ENCODE measurements at regions of chr6 and their contacts with region 1.

Region 1: DNA sequence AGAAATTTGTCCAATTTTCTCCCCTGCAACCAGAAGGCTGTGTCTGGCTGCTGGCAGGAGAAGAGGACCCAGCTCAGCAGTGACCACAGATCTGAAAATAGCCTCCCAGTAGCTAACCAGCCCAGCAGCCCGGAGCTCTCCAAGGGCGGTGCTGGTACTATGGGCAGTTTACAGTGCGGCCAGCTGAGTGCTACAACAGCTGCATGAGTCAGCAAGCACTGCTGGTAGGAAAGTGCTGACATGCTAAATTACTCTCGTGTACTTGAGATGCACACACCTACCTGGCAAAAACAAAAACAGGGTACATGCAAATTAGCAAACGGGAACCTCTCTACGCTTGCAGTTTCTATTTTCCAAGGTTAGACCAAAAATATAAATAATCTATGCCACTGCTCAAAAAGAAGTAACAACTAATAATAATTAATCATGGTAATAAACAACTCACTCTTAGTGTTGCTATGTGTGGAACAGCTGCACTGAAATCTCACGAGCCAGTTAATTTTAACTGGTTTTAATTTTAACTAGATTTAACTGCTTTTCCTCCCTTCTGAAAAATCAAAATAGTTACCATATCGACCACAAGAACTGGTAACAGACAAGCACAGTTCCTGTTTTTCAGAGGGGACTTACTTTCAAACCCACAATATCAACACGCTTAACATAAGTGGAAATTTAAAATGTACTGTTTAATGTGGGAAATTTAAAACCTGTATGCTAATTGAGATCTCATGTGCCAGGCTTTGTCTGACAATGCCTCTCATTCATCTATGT is 10.8 kb downstream of the BACH2 start:
- DNase-seq: peak; percentile 74
- H3K4me3 Mint-ChIP-seq: peak overlapping the region; percentile 72
- H3K27ac Mint-ChIP-seq: peak overlapping the region; percentile 96
- H3K4me1 Mint-ChIP-seq: peaks cover 40% of the 10 kb centered on the region
- H3K27me3 Mint-ChIP-seq: no peaks in the 10 kb centered on the region
- CTCF ChIP-seq: no peak

Region 2: DNA sequence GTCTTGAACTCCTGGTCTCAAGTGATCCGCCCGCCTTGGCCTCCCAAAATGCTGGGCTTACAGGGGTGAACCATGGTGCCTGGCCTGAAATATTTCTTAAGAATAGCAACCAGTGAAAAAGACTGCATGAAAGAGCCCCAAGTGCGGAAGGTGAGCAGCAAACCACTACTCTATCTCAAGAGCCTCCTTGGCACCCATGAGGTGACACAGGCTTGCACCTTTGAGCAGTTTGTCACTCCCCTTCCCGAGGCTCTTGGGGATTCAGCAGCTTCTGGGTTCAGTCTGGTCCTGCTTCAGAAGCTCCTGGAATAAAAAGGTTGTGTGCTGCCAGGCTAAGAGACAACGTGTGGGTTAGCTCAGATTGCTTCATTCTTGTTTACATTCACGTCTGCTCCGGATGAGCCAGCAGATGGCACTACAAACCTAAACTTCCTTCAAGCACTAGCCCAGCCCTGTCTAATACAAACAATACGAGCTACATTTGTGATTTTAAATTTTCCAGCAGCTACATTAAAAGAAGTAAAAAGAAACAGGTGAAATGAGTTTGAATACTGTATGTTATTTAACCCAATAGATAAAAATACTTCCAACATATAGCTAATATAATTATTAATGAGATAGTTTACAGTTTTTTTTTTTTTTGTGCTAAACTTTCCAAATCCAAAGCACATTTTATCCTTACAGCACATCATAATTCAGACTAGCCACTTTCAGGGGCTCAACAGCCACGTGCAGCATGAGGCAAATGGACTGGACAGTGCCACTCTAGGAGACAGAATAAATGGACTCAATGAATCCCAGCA is 345.4 kb before region 1 on chr6:
- CTCF ChIA-PET with region 1: interaction called, 14 read pairs
- intact Hi-C with region 1: loop called (anchors 2 kb)
- DNase-seq: peak; percentile 67
- H3K4me3 Mint-ChIP-seq: peak overlapping the region; percentile 12
- H3K27ac Mint-ChIP-seq: peak overlapping the region; percentile 27
- H3K4me1 Mint-ChIP-seq: peaks cover 12% of the 10 kb centered on the region
- H3K27me3 Mint-ChIP-seq: peaks cover 21% of the 10 kb centered on the region
- CTCF ChIP-seq: peak; percentile 61

Region 3: DNA sequence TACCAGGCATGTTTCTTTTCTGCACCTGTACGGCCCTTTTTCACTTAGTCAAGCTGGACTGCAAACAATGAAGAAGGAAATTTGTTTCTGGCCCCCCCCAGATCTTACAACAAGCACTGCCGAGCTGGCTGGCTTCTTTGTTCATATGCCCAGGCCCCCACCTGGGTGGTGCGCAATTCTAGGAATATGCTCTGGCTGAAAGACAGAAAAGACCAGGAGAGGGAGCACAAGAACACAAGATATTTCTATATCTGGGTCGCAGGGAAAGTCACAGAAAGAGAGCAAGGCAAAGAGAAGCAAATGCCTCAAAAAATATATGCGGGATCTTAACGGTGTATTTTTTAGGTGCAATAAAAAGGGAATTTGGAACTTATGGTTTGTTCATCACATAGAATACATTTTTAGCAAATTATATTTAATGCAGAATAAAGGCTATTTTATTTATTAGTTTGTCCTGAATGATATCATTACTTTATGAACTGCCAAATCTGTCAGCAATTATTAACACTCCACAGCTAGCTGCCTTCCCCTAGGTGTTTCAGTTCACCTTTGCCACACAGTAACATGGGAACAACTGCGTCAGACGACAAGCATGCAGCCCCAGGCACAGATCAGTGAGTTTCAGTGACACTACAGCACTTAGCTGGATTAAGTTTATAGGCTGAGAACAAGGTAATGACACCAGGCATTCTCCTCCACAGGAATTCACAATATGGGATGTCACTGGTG is 315.0 kb before region 1 on chr6:
- CTCF ChIA-PET with region 1: no interaction called
- intact Hi-C with region 1: loop called (anchors 2 kb)
- DNase-seq: peak; percentile 64
- H3K4me3 Mint-ChIP-seq: no peak overlapping the region
- H3K27ac Mint-ChIP-seq: no peak overlapping the region
- H3K4me1 Mint-ChIP-seq: peaks cover 2% of the 10 kb centered on the region
- H3K27me3 Mint-ChIP-seq: no peaks in the 10 kb centered on the region
- CTCF ChIP-seq: peak; percentile 25

Region 4: DNA sequence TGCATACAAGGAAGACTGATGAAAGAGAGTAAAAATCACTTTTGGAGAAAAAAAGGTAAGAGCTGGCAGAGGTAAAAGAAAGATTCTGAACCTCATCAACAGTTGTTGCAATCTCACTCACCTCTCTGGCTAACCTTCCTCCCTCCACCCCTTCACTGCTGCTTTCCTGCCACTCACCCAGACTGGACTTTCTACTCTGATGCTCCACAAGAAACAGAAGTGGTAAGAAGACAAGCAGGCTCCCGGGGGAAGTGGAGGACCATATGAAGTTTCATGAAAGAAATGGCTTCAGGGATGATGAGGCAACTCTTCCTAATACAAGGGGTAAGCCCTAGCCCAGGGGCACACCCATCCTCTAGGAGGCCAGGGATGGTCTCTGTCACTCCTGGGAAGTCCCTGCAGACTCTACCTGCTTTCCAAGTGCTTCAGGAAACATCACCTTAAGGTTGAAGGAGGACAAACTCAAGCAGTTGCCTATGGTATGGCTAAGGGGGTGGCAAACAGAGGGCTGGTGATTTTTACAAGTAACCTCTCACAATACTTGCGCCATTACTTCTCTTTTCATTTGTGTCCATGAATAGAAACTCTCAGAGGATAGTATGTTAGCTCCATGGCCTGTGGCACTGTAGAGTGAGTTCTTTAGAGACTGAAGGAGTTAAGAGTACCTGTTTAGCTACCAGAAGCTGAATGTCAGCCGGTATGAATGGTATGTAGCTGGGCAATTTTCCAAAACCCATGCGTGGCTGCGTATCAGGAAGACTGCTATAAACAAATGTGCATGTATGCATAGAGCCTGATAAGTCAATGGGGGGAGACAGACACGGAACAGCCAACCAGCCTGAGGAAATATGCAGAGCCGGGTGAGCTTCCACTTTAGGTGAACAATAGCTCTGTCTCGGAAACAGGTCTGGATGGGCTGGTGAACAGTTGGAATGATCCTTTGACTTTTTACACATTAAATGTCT is 101.2 kb before region 1 on chr6:
- CTCF ChIA-PET with region 1: interaction called, 12 read pairs
- intact Hi-C with region 1: loop called (anchors 2 kb)
- DNase-seq: peak; percentile 77
- H3K4me3 Mint-ChIP-seq: peak overlapping the region; percentile 39
- H3K27ac Mint-ChIP-seq: peak overlapping the region; percentile 83
- H3K4me1 Mint-ChIP-seq: peaks cover 32% of the 10 kb centered on the region
- H3K27me3 Mint-ChIP-seq: no peaks in the 10 kb centered on the region
- CTCF ChIP-seq: no peak

Region 5: DNA sequence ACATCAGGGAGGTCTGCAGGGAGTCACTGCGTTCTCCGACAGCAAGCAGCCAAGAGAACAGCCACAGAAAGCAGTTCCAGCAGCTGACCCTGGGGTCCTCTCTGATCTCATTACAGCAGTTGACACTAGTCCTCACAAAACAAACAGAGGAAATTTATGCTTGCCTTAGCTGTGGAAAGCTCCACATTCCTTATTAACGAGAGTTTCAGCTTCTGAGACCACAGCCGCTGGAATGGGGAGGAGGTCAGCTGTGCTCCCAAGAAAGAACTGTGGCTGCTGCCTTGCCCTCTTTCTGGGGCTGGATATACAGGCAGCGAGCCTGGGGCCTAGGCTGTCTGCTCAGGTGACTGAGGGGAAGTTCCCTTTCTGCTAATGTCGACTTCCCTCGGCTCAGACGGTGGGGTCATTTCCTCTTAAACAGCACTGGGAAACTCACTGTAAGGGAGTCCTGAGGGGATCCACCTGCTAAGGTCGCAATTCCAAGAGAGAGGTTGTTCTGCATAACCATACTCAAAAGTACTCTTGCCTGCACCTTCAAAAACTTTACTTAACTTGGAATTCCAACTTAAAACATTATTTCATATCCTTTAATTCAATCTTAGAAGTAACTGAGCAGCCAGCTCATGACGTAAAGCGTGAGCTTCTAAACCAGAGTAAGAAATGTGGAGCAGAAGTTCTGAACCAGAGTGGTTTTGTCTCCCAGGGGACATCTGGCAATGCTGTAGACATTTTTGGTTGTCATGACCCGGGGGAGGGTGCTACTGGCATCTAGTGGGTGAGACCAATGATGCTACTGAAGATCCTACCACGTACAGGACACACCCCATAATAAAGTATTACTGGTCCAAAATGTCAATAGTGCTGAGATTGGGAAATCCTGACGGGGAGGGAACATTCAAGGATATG is 69.5 kb before region 1 on chr6:
- CTCF ChIA-PET with region 1: interaction called, 8 read pairs
- intact Hi-C with region 1: loop called (anchors 2 kb)
- DNase-seq: no peak
- H3K4me3 Mint-ChIP-seq: no peak overlapping the region
- H3K27ac Mint-ChIP-seq: no peak overlapping the region
- H3K4me1 Mint-ChIP-seq: peaks cover 6% of the 10 kb centered on the region
- H3K27me3 Mint-ChIP-seq: no peaks in the 10 kb centered on the region
- CTCF ChIP-seq: no peak

Region 6: GRCh38 chr6:90251295-90251992 is 34.4 kb before region 1 on chr6:
- CTCF ChIA-PET with region 1: no interaction called
- intact Hi-C with region 1: no loop called
- DNase-seq: no peak
- H3K4me3 Mint-ChIP-seq: no peak overlapping the region
- H3K27ac Mint-ChIP-seq: no peak overlapping the region
- H3K4me1 Mint-ChIP-seq: no peaks in the 10 kb centered on the region
- H3K27me3 Mint-ChIP-seq: no peaks in the 10 kb centered on the region
- CTCF ChIP-seq: no peak

Region 7: DNA sequence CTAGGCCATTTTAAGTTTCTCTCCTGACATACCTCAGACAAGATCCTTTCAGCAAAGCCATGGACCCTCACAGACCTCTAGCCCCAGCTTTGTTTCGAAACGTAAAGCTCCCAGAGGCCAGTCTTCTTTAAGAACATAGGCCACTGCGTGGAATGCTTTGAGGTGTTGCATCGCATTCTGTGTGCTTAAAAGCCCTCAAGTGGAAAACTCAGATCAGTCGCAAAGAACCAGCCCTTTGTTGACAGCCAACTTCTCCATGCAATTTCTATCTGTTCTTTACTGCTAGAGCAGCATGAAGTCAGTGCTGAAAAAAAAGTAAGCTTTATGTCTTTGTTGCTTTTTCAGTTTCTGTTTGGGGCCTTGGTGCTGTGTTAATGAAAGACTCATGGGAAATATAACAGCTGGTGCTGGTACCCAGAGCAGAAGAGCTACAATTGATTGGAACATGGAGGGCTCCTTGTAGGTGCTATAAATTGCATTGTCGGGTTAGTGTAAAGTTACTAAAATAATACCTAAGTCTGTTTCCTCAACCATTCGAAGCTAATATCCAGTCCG is 158.4 kb after region 1 on chr6:
- CTCF ChIA-PET with region 1: no interaction called
- intact Hi-C with region 1: no loop called
- DNase-seq: no peak
- H3K4me3 Mint-ChIP-seq: no peak overlapping the region
- H3K27ac Mint-ChIP-seq: no peak overlapping the region
- H3K4me1 Mint-ChIP-seq: no peaks in the 10 kb centered on the region
- H3K27me3 Mint-ChIP-seq: no peaks in the 10 kb centered on the region
- CTCF ChIP-seq: no peak

Region 8: GRCh38 chr6:90478789-90479602 is 193.2 kb after region 1 on chr6:
- CTCF ChIA-PET with region 1: interaction called, 7 read pairs
- intact Hi-C with region 1: loop called (anchors 2 kb)
- DNase-seq: peak; percentile 89
- H3K4me3 Mint-ChIP-seq: peak overlapping the region; percentile 15
- H3K27ac Mint-ChIP-seq: peak overlapping the region; percentile 70
- H3K4me1 Mint-ChIP-seq: peaks cover 17% of the 10 kb centered on the region
- H3K27me3 Mint-ChIP-seq: no peaks in the 10 kb centered on the region
- CTCF ChIP-seq: peak; percentile 75

Measured in Calu3 (cell line).